A673 (cell line): ENCODE measurements at regions of chrX and their contacts with region 1.

Region 1: GRCh38 chrX:110163488-110163887 is 154.4 kb downstream of the AMMECR1 start:
- DNase-seq: no peak
- H3K4me3 ChIP-seq: no peak overlapping the region
- H3K27ac ChIP-seq: no peak overlapping the region
- H3K4me1 ChIP-seq: no peaks in the 10 kb centered on the region
- H3K27me3 ChIP-seq: no peaks in the 10 kb centered on the region
- CTCF ChIP-seq: no peak

Region 2: GRCh38 chrX:109856974-109857373 is 306.5 kb before region 1 on chrX:
- CTCF ChIA-PET with region 1: no interaction called
- POLR2A ChIA-PET with region 1: no interaction called
- intact Hi-C with region 1: no loop called
- DNase-seq: peak; percentile 48
- H3K4me3 ChIP-seq: no peak overlapping the region
- H3K27ac ChIP-seq: no peak overlapping the region
- H3K4me1 ChIP-seq: no peaks in the 10 kb centered on the region
- H3K27me3 ChIP-seq: no peaks in the 10 kb centered on the region
- CTCF ChIP-seq: peak; percentile 89

Region 3: DNA sequence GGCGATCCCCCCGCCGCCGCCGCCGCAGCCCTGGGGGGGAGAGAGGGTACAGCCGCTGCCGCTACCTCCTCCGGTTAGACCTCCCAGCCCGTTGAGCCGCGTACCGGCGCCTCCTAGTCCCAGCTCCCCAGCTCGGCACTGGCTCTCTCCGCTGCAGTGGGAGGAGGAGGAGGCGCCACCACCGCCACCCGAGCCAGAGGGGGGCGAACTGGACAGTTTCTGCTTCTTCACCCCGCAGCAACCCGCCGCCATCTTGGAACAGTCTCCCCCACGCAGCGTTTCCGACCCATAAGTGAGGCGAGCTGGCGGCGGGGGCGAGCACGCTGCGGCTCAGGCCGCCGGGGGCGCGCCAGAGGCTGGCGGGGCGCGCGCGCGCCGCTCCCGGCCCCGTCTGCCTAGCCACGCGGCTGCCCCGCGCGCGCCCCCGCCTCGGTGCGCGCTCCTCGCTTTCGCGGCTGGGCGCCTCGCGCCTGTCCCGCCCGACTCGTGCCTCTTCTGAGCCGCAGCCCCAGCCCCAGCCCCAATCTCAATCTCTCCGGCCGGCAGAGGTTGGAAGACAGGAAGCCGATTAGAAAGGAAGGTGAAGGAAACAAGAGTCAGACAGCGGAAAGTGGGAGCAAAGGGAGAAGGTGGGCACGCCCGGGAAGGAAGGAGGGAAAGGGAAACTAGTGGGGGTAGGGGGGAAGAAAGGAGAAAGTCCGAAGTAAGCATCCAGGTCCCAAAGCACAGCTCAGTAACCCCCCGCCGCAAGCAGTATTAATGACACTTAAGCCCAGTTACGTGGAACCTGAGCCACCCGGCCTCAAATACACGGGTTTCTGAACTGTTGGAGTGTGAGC is 154.6 kb after region 1 on chrX and contains the start of gene AMMECR1:
- CTCF ChIA-PET with region 1: no interaction called
- POLR2A ChIA-PET with region 1: no interaction called
- intact Hi-C with region 1: loop called (anchors 5 kb)
- DNase-seq: peak; percentile 87
- H3K4me3 ChIP-seq: peak within 1 kb of the TSS; percentile 67
- H3K27ac ChIP-seq: peak within 1 kb of the TSS; percentile 78
- H3K4me1 ChIP-seq: no peaks in the 10 kb centered on the region
- H3K27me3 ChIP-seq: no peaks in the 10 kb centered on the region
- CTCF ChIP-seq: no peak
- total RNA-seq, gene AMMECR1: 11.6 and 13.0 TPM in 2 replicates

Region 4: GRCh38 chrX:110407910-110408545 is 244.5 kb after region 1 on chrX:
- CTCF ChIA-PET with region 1: interaction called, 6 read pairs
- POLR2A ChIA-PET with region 1: no interaction called
- intact Hi-C with region 1: loop called (anchors 1 kb)
- DNase-seq: peak; percentile 76
- H3K4me3 ChIP-seq: no peak overlapping the region
- H3K27ac ChIP-seq: no peak overlapping the region
- H3K4me1 ChIP-seq: no peaks in the 10 kb centered on the region
- H3K27me3 ChIP-seq: no peaks in the 10 kb centered on the region
- CTCF ChIP-seq: peak; percentile 74

Region 5: DNA sequence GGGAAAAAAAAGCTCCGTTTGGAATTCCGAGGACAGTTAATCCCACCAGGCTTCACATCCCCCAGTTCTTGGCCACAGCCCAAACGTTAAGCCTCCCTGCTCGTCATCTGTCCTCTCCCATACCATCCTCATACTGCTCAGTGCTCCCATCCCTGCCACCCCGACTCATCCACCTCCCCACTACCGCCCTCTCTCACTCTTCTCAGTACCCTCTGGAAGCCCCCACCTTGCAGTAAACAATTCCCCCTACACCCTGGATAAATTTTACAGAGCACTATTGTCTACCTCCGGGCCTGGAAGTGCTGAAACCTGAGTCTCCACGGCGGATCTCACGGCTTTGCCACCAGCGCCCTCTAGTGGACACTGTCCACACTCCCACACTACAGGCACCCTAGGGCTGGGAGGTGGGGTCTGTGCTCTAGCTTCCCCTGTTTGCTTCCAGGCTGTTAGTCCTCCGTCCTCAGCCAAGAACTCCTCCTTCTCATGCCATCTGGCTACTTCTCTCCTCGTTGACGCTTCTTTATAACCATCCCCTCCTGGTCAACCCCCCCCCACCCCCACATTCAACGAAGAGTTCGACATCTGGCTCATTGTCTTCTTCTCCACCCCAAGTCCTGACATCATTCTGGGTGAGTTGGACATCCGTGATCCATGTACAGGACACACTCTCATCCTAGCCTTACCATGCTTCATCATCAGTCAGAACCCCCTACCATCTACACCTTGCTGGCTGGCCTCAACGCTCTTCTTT is 249.7 kb after region 1 on chrX:
- CTCF ChIA-PET with region 1: interaction called, 6 read pairs
- POLR2A ChIA-PET with region 1: no interaction called
- intact Hi-C with region 1: loop called (anchors 1 kb)
- DNase-seq: peak; percentile 83
- H3K4me3 ChIP-seq: peak overlapping the region; percentile 27
- H3K27ac ChIP-seq: no peak overlapping the region
- H3K4me1 ChIP-seq: peaks cover 4% of the 10 kb centered on the region
- H3K27me3 ChIP-seq: no peaks in the 10 kb centered on the region
- CTCF ChIP-seq: peak; percentile 94